ENCODE measurements at regions of chrX and their contacts with region 1.

Region 1: DNA sequence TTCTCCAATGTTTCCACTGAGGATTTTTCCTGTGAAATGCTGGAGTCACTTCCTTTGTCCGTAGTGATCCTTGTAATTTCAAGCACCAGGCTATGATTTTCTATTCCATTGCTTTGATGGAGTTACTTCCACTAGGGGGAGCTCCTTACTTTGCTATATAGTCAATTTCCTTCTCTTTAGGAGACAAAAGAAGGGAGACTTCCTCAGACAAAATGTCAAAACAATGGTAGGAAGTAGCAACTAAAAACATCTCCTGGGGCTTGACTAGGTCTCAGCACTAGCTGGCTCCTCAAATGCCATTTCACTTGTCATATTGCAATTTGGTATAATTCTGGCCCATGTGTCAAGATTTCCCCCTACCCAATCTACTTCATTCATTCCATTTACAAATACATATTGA is 24.1 kb downstream of the ZCCHC12 start:
- DNase-seq: no peak
- H3K4me3 ChIP-seq: no peak overlapping the region
- H3K27ac ChIP-seq: no peak overlapping the region
- H3K4me1 ChIP-seq: no peaks in the 10 kb centered on the region
- H3K27me3 ChIP-seq: no peaks in the 10 kb centered on the region
- CTCF ChIP-seq: peak; percentile 52 to 66 (median 55)
- EP300 ChIP-seq: no peak
- POLR2A ChIP-seq: no peak

Region 2: DNA sequence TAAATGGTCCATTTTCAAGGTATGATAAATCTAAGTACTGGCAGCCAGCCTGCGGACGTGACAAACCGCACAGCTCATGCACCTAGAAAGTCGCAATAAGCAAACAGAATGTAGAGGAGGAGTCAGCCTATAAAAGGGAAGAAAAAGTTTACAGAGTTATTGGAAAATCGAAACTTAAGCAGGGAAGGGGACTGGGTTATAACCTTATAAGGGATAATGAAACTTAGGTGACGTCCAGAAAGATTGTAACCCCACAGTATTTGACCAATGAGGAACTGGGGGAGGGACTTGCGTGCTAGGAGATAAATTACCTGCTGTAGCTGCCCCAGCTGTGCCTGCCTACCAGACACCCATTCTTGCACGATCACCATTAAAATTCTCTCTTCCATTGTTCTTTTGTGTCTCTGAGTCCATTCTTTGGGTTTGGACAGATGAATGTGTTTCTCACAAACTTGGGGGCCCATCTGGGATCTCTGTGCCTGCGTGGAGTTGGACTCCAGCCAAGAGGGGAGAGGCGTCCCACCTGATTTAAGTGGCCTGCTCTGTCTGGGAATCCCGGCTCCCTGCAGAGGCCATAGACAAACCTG is 37.0 kb after region 1 on chrX:
- intact Hi-C with region 1: no loop called
- DNase-seq: no peak
- H3K4me3 ChIP-seq: no peak overlapping the region
- H3K27ac ChIP-seq: no peak overlapping the region
- H3K4me1 ChIP-seq: no peaks in the 10 kb centered on the region
- H3K27me3 ChIP-seq: no peaks in the 10 kb centered on the region
- CTCF ChIP-seq: no peak
- EP300 ChIP-seq: no peak
- POLR2A ChIP-seq: no peak

Region 3: DNA sequence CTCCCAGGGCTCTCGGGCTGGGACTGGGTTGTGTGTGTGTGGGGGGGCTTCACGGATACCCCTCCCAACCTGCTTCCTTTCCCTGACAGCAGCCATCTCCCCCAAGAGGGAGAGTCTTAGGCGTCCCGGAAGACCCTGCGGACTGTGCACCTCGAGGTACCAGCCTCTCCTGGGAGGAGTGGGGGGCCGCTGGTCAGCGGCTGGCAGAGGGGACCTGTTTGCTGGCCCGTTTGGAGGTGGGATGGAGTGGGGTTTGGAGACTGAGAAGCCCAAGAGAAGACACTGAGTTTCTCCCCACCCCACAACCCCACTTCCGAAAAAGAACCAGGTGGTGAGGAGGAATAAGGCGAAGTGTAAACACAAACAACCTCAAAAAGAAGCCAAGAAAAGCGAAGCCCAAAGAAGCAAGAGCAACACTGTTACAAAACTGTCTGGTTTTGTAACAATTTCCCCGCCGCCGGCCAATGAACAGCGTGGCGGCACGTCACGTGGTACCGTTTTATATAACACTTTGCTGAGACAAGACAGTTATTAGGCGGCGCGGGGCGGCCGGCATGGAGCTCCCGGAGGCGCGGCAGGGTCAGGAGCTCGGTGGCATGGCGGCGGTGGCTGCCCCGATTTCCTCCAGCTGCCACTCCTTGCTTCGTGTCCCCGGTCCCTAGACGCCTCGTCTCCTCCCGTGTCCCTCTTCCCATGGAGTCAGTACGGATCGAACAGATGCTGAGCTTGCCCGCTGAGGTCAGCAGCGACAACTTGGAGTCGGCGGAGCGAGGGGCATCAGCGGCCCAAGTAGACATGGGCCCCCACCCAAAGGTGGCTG is 126.6 kb after region 1 on chrX and contains the start of gene LONRF3:
- intact Hi-C with region 1: loop called (anchors 10 kb)
- DNase-seq: peak; percentile 96
- H3K4me3 ChIP-seq: peak within 1 kb of the TSS; percentile 61 to 76 (median 66)
- H3K27ac ChIP-seq: peak within 1 kb of the TSS; percentile 82 to 86 (median 85)
- H3K4me1 ChIP-seq: peaks cover 0 to 23% (median 14%) of the 10 kb centered on the region in 4 donors
- H3K27me3 ChIP-seq: peaks cover 0 to 5% (median 2%) of the 10 kb centered on the region in 4 donors
- CTCF ChIP-seq: no peak
- EP300 ChIP-seq: no peak
- POLR2A ChIP-seq: peak; percentile 90
- total RNA-seq, gene LONRF3: 14.3 to 19.9 (median 17.5) TPM

Region 4: GRCh38 chrX:119004920-119005524 is 157.3 kb after region 1 on chrX:
- intact Hi-C with region 1: loop called (anchors 5 kb)
- DNase-seq: no peak
- H3K4me3 ChIP-seq: no peak overlapping the region
- H3K27ac ChIP-seq: no peak overlapping the region
- H3K4me1 ChIP-seq: peaks cover 0 to 22% (median 20%) of the 10 kb centered on the region in 4 donors
- H3K27me3 ChIP-seq: no peaks in the 10 kb centered on the region
- CTCF ChIP-seq: peak; percentile 75 to 90 (median 83)
- EP300 ChIP-seq: no peak
- POLR2A ChIP-seq: no peak

Region 5: GRCh38 chrX:119067023-119067739 is 219.5 kb after region 1 on chrX:
- intact Hi-C with region 1: loop called (anchors 2 kb)
- DNase-seq: no peak
- H3K4me3 ChIP-seq: no peak overlapping the region
- H3K27ac ChIP-seq: no peak overlapping the region
- H3K4me1 ChIP-seq: peaks cover 0 to 4% (median 2%) of the 10 kb centered on the region in 4 donors
- H3K27me3 ChIP-seq: no peaks in the 10 kb centered on the region
- CTCF ChIP-seq: peak; percentile 60 to 63 (median 63)
- EP300 ChIP-seq: no peak
- POLR2A ChIP-seq: no peak